OCI-LY7 (cell line): ENCODE measurements at regions of chr6 and their contacts with region 1.

Region 1: DNA sequence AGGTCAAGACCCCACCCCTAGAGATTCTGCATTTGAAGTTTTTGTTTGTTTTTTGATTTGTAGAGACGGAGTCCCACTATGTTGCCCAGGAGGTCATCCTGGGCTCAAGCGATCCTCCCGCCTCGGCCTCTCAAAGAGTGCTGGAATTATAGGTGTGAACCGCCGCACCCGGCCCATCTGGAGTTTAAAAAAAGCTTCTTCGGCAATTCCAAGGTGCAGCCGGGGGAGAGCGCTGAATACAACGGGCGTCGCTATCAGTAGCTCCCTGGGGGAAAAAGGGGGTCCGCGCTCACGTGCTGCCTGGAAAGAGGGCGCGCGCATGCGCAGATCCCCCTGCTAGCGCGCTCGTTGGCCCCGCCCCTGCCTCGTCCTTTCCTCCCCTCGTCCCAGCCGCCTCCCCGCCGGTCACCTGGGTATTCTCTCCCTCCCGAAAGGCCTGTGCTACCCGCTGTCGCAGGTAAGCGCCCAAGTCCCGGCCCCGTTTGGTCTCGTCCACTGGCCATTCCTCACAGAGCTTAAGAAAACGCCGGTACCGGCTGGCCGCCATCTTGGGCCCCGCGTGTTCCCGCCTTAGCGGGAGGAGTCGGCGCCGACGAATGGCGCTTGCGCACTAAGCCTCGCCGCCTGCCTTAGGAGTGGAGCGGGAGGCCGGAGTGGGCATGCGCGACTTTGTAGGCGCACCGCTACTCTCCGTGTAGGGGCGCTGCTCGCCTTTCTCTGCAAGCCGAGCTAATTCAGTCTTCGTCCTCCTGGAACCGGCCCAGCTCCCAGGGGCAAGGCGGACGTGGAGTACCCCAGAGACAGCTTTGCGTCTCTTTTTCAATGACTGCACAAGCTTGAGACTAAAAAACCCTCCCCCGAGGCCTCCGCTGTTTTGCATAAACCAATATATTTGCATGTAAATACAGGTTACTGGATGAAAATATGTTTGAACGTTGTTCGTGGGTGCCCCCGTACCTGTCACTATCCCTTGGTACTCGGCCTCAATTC is at the start of gene UQCC2:
- DNase-seq: peak; percentile 99
- H3K4me3 ChIP-seq: peak within 1 kb of the TSS; percentile 76
- H3K27ac ChIP-seq: peak within 1 kb of the TSS; percentile 76
- H3K4me1 ChIP-seq: peaks cover 30% of the 10 kb centered on the region
- CTCF ChIP-seq: peak; percentile 80
- total RNA-seq, gene UQCC2: 64.9 and 82.1 TPM in 2 replicates

Region 2: DNA sequence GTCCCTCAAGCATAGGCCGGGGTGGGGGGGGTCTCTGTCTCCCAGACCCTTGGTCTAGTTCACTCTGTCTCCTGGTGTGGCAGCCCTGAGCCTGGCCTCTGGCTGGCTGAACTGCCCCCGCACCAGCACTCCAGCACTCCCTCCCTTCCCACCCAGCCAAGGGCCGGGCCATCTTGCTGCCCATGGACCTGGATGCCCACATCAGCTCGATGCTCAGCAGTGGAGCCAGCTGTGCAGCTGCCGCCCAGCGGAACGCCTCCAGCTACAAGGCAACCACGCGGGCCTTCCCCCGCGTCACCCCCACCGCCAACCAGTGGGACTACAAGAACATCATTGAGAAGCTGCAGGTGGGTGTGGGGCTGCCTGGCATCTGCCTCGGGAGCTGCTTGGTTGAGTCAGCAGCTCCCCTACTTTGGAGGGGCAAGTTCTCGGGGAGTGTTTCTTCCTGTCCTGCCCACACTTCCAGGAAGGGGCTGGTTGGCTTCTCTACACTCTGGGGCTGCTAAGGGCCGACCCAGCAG is 28.3 kb before region 1 on chr6:
- CTCF ChIA-PET with region 1: no interaction called
- POLR2A ChIA-PET with region 1: no interaction called
- intact Hi-C with region 1: no loop called
- DNase-seq: no peak
- H3K4me3 ChIP-seq: no peak overlapping the region
- H3K27ac ChIP-seq: no peak overlapping the region
- H3K4me1 ChIP-seq: no peaks in the 10 kb centered on the region
- CTCF ChIP-seq: no peak

Region 3: GRCh38 chr6:33700391-33701050 is 10.9 kb before region 1 on chr6:
- CTCF ChIA-PET with region 1: interaction called, 12 read pairs
- POLR2A ChIA-PET with region 1: interaction called, 4 read pairs
- intact Hi-C with region 1: no loop called
- DNase-seq: peak; percentile 87
- H3K4me3 ChIP-seq: no peak overlapping the region
- H3K27ac ChIP-seq: peak overlapping the region; percentile 14
- H3K4me1 ChIP-seq: peaks cover 38% of the 10 kb centered on the region
- CTCF ChIP-seq: peak; percentile 93

Region 4: GRCh38 chr6:33761922-33762629 is 50.6 kb after region 1 on chr6:
- CTCF ChIA-PET with region 1: interaction called, 6 read pairs
- POLR2A ChIA-PET with region 1: interaction called, 4 read pairs
- intact Hi-C with region 1: loop called (anchors 5 kb)
- DNase-seq: peak; percentile 52
- H3K4me3 ChIP-seq: no peak overlapping the region
- H3K27ac ChIP-seq: no peak overlapping the region
- H3K4me1 ChIP-seq: no peaks in the 10 kb centered on the region
- CTCF ChIP-seq: peak; percentile 75

Region 5: DNA sequence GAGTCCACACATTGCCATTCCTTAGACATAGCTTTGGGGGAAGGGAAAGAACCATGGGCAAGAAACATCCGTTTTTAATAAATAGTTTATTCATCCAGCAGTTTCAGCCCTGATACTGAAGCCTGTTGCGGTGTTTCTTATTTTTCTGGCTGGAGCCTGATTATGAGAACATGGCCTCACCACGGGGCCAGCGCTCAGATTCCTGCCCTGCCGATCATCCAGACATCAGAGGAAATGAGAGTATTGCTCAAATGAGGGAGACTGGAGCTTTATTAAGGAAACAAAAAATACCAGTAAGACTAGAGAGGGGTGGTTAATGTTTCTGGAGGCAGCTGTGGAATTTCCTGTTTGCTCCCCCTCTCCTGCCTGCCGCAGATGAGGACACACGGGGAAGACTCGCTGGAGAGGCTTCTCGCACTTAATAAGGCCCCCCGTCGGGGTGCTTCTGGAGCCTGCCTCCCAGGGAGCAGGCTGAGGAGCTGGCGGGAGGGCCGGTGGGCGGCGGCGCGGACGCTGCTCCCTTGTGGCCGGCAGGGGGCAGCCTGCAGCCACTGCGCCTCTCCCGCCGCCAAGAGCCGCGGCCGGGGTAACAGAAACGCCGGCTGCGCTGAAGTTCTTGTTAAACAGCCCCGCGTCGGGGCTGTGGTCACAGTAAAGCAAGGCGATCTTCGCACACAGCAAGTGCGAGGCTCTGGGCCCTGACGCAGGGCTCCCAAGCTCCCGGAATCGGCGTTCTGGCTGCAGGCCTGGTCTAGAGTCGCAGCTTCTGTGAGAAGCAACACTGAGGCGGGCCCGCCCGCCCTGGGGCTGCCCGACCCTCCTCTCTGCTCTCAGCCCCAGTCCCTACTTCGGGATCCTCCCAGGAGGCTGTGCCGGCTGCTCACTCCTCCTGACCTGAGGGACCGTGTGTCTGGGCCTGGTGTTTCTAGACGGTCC is 60.0 kb after region 1 on chr6:
- CTCF ChIA-PET with region 1: interaction called, 3 read pairs
- POLR2A ChIA-PET with region 1: interaction called, 4 read pairs
- intact Hi-C with region 1: loop called (anchors 2 kb)
- DNase-seq: peak; percentile 70
- H3K4me3 ChIP-seq: no peak overlapping the region
- H3K27ac ChIP-seq: no peak overlapping the region
- H3K4me1 ChIP-seq: peaks cover 3% of the 10 kb centered on the region
- CTCF ChIP-seq: peak; percentile 91

Region 6: DNA sequence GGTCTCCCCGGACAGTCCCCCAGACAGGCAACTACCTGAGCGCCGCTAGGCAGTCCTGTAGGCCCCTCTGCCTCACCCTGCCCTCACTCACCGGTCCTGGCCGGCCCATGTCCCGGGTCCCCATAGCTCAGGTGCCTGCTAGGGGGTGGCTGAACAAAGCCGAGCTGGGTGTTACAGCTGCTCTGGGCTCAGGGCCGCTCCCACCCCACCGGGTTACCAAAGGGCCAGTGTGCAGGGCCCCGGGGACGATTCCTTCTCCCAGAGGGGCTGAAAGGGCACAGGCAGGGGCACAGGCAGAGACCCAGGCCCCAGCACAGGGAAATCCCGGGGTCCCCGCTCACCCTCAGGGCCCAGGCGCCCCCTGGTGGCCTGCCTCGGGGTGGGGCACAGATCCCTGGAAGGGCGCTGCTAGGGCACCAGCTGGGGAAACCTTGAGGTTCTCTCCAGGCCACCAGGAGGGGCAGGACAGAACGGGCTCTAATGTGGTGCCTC is 316.1 kb after region 1 on chr6:
- CTCF ChIA-PET with region 1: no interaction called
- POLR2A ChIA-PET with region 1: no interaction called
- intact Hi-C with region 1: loop called (anchors 5 kb)
- DNase-seq: peak; percentile 60
- H3K4me3 ChIP-seq: no peak overlapping the region
- H3K27ac ChIP-seq: no peak overlapping the region
- H3K4me1 ChIP-seq: peaks cover 25% of the 10 kb centered on the region
- CTCF ChIP-seq: peak; percentile 80